GM23248 (cell line): ENCODE measurements at regions of chr1 and their contacts with region 1.

Region 1: GRCh38 chr1:32939655-32940371 is 24.8 kb downstream of the RNF19B start:
- DNase-seq: peak; percentile 92
- H3K4me3 ChIP-seq: no peak overlapping the region
- H3K27ac ChIP-seq: peak overlapping the region; percentile 60
- H3K4me1 ChIP-seq: peaks cover 19% of the 10 kb centered on the region
- H3K27me3 ChIP-seq: no peaks in the 10 kb centered on the region

Region 2: GRCh38 chr1:33007190-33008050 is 67.6 kb after region 1 on chr1:
- in situ Hi-C with region 1: loop called (anchors 5 kb)
- DNase-seq: peak; percentile 96
- H3K4me3 ChIP-seq: no peak overlapping the region
- H3K27ac ChIP-seq: no peak overlapping the region
- H3K4me1 ChIP-seq: peaks cover 32% of the 10 kb centered on the region
- H3K27me3 ChIP-seq: no peaks in the 10 kb centered on the region